Dorsolateral prefrontal cortex (tissue), 120 donors: ENCODE measurements at regions of chr12 and their contacts with region 1.

Region 1: DNA sequence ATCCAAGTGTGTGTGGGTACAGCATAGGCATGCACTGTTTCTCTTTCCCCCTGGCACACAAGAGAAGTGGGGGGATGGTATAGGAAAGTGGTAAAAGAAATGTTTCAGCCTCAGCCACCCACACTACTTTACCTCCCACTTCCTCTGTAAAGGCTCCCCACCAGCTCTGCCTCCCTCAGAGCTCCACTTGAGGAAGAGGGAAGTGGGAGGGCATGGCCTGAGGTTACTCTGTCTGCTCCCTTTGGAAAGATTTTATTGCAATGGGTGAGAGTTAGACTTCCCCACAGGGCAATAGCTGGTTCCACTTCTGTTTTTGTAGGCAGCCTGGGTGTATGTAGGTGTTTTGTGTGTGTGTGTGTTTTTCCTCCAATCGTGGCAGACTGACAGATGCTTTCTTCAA is 145.3 kb downstream of the SSPN start:
- DNase-seq: peak in 1 of 10 donors; percentile 30
- H3K4me3 ChIP-seq: no peak overlapping the region
- H3K27ac ChIP-seq: peak overlapping the region in 58 of 59 donors; percentile 8 to 97 (median 90)
- H3K27me3 ChIP-seq: no peaks in the 10 kb centered on the region
- CTCF ChIP-seq: no peak

Region 2: DNA sequence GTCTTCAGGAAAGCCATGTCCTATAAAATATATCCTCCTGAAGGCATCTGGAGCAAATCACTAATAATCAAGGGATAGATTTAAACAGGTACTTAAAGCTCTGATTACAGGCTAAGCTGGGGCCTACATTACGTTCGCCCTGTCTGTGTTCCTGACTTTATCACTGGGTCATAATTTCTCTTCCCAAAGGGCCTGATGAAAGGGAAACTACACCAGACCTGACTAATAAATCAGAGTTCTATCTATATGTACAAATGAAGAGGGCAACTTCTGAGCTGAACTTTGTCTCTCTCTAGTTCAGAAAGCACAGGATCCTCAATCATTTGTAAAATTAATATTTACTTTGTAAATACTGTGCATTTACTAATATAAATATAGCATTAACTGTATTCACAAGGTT is 426.0 kb before region 1 on chr12:
- intact Hi-C with region 1: no loop called
- DNase-seq: no peak
- H3K4me3 ChIP-seq: no peak overlapping the region
- H3K27ac ChIP-seq: no peak overlapping the region
- H3K27me3 ChIP-seq: peaks cover 0 to 4% (median 0%) of the 10 kb centered on the region in 45 donors
- CTCF ChIP-seq: no peak

Region 3: DNA sequence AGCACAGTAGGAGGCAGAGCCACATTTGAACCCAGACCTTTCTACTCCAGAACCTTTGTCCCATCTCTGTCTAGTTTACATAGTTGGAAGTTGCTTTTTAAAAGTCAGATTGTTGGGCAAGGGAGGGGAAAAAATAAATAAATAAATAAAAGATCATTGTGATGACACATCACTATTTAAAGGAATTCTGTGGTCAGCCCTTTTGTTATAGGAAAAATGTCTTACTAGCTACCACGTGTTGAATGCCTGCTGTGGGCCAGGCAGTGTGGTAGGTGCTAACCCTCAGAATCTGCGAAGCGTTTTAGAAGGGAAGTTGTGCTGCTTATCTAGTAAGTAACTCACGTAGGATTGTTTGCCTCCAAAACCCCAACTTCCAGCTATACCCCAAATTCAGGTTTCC is 278.1 kb before region 1 on chr12:
- intact Hi-C with region 1: no loop called
- DNase-seq: no peak
- H3K4me3 ChIP-seq: no peak overlapping the region
- H3K27ac ChIP-seq: no peak overlapping the region
- H3K27me3 ChIP-seq: no peaks in the 10 kb centered on the region
- CTCF ChIP-seq: no peak

Region 4: GRCh38 chr12:26204612-26205289 is 135.9 kb before region 1 on chr12:
- intact Hi-C with region 1: loop called in 1 of 2 experiments (anchors 5 kb)
- DNase-seq: peak in 1 of 10 donors; percentile 31
- H3K4me3 ChIP-seq: peak overlapping the region in 49 of 59 donors; percentile 1 to 52 (median 25)
- H3K27ac ChIP-seq: peak overlapping the region in 40 of 59 donors; percentile 2 to 79 (median 50)
- H3K27me3 ChIP-seq: no peaks in the 10 kb centered on the region
- CTCF ChIP-seq: no peak

Region 5: GRCh38 chr12:26239122-26239851 is 101.4 kb before region 1 on chr12:
- intact Hi-C with region 1: loop called in 1 of 2 experiments (anchors 5 kb)
- DNase-seq: peak; percentile 34 to 74 (median 64)
- H3K4me3 ChIP-seq: peak overlapping the region in 8 of 59 donors; percentile 0 to 30 (median 12)
- H3K27ac ChIP-seq: peak overlapping the region; percentile 40 to 96 (median 85)
- H3K27me3 ChIP-seq: peaks cover 0 to 3% (median 0%) of the 10 kb centered on the region in 45 donors
- CTCF ChIP-seq: peak in 1 of 56 donors; percentile 10